AG04450 (cell line): ENCODE measurements at regions of chr15 and their contacts with region 1.

Region 1: GRCh38 chr15:58749532-58750337 is at the start of gene ADAM10:
- DNase-seq: peak; percentile 98
- H3K4me3 ChIP-seq: peak within 1 kb of the TSS; percentile 70
- H3K27ac ChIP-seq: peak within 1 kb of the TSS; percentile 93
- H3K27me3 ChIP-seq: no peaks in the 10 kb centered on the region
- CTCF ChIP-seq: no peak
- polyA plus RNA-seq, gene ADAM10: 198 and 220 TPM in 2 replicates

Region 2: GRCh38 chr15:58314593-58315216 is 435.0 kb before region 1 on chr15:
- CTCF ChIA-PET with region 1: no interaction called
- POLR2A ChIA-PET with region 1: interaction called, 11 read pairs
- DNase-seq: no peak
- H3K4me3 ChIP-seq: no peak overlapping the region
- H3K27ac ChIP-seq: no peak overlapping the region
- H3K27me3 ChIP-seq: no peaks in the 10 kb centered on the region
- CTCF ChIP-seq: no peak

Region 3: DNA sequence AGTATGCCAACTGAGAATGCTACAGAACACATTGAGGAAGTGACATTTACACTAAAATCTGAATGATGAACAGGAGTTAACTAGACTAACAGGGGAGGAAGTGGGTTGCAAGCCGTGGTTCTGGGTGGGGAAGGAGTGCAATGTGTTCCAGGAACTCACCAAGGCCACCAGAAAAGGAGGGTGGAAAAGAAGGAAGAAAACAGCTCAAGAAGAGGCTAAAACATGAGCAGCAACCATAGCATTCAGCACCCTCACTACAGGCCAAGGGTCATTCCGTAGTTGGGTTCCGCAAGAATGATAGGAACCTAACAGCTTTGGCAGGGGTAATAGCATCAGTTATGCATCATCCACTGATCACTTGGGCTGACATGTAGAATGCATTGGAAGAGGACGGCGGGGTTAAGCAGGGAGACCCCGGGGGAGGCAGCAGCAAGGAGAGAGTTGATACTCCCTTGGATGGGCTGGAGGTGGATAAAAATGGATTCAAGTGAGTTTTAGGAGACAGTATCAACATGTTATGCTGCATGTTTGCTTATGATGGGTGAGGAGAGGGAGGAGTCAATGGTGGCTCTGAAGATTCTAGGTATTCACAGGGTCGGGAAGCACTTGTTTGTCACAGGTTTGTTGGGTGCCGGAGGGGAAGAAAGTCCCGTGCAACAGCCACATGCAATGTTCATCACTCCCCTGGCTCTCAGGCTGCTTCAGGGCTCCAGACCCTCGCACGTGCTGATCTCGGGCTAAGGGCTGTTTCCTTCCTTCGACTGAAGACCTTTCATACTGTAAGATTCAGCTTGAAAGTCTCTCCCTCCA is 264.7 kb before region 1 on chr15:
- CTCF ChIA-PET with region 1: no interaction called
- POLR2A ChIA-PET with region 1: no interaction called
- DNase-seq: no peak
- H3K4me3 ChIP-seq: no peak overlapping the region
- H3K27ac ChIP-seq: no peak overlapping the region
- H3K27me3 ChIP-seq: no peaks in the 10 kb centered on the region
- CTCF ChIP-seq: no peak

Region 4: GRCh38 chr15:58770857-58771620 is 21.3 kb after region 1 on chr15 and contains the start of gene MINDY2:
- CTCF ChIA-PET with region 1: interaction called, 19 read pairs
- POLR2A ChIA-PET with region 1: interaction called, 75 read pairs
- DNase-seq: peak; percentile 98
- H3K4me3 ChIP-seq: peak within 1 kb of the TSS; percentile 79
- H3K27ac ChIP-seq: peak within 1 kb of the TSS; percentile 97
- H3K27me3 ChIP-seq: no peaks in the 10 kb centered on the region
- CTCF ChIP-seq: peak; percentile 36
- polyA plus RNA-seq, gene MINDY2: 11.0 and 17.5 TPM in 2 replicates